Activated CD4-positive, alpha-beta memory T cell treated with anti-CD3 and anti-CD28 coated beads, Interleukin-2, amount 10 ng/mL, durations not matched to agents 7 days and 5 days (primary cell): ENCODE measurements at regions of chr15 and their contacts with region 1.

Region 1: DNA sequence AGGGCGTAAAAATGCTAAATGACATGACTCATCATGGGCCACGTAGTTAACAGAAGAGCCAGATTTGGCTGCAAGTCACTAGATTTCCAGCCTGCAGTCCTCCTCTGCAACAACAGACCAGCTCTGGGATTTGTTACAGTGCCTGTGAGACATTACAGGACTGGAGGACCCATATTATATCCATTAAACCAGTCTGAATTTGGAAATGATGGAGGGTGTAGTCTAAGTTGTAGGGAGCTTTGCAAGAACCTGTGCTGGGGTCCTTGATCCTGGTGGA is 10.8 kb downstream of the ZNF774 start:
- DNase-seq: no peak
- H3K4me3 Mint-ChIP-seq: no peak overlapping the region
- H3K27ac Mint-ChIP-seq: peak overlapping the region; percentile 58
- H3K4me1 Mint-ChIP-seq: peaks cover 37% of the 10 kb centered on the region
- H3K27me3 Mint-ChIP-seq: no peaks in the 10 kb centered on the region

Region 2: DNA sequence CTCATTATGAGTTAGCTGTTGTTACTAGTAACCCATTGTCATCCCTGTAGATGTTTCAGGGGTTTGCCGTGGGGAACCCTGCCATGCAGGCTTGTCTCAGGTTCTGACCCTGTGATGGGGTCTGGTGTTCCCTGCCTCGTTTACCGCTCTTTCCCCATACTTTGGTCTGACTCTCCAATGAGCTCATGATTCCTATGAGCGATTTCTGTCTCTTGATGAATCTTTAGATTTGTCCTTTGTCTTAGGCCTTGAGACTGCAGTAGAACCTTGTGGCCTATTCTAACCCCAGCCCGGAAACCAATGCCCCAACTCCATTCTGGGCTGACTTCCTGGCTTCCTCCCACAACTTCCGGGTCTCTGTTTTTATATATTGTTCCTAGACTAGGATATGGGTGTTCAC is 13.9 kb after region 1 on chr15:
- CTCF ChIA-PET with region 1: interaction called, 46 read pairs
- POLR2A ChIA-PET with region 1: interaction called, 27 read pairs
- DNase-seq: peak; percentile 85
- H3K4me3 Mint-ChIP-seq: peak overlapping the region; percentile 23
- H3K27ac Mint-ChIP-seq: peak overlapping the region; percentile 86
- H3K4me1 Mint-ChIP-seq: peaks cover 46% of the 10 kb centered on the region
- H3K27me3 Mint-ChIP-seq: no peaks in the 10 kb centered on the region

Region 3: DNA sequence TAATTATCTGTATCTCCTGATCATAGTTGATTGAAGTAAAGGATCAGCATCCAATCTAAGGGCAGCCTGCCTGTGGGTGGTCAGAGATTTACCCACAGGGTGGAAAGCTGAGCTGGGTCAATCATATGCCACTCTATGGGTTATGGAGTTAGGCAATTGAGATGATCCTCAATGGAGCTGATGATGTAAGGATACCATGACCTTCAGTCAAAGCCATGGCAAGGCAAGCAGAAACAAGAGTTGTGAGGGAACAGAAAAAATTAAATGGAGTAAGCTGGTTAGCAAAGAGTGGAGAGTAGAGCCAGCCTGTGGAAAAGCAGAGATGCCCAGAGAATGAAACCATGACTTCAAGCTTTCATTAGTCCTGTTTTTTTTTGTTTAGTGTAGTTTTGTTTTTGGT is 19.4 kb after region 1 on chr15:
- CTCF ChIA-PET with region 1: interaction called, 47 read pairs
- POLR2A ChIA-PET with region 1: interaction called, 81 read pairs
- DNase-seq: no peak
- H3K4me3 Mint-ChIP-seq: no peak overlapping the region
- H3K27ac Mint-ChIP-seq: no peak overlapping the region
- H3K4me1 Mint-ChIP-seq: peaks cover 26% of the 10 kb centered on the region
- H3K27me3 Mint-ChIP-seq: no peaks in the 10 kb centered on the region

Region 4: GRCh38 chr15:90482124-90483011 is 119.5 kb after region 1 on chr15:
- CTCF ChIA-PET with region 1: interaction called, 58 read pairs
- POLR2A ChIA-PET with region 1: interaction called, 3 read pairs
- DNase-seq: peak; percentile 53
- H3K4me3 Mint-ChIP-seq: no peak overlapping the region
- H3K27ac Mint-ChIP-seq: peak overlapping the region; percentile 23
- H3K4me1 Mint-ChIP-seq: peaks cover 49% of the 10 kb centered on the region
- H3K27me3 Mint-ChIP-seq: no peaks in the 10 kb centered on the region